ENCODE measurements at regions of chr6 and their contacts with region 1.

Region 1: DNA sequence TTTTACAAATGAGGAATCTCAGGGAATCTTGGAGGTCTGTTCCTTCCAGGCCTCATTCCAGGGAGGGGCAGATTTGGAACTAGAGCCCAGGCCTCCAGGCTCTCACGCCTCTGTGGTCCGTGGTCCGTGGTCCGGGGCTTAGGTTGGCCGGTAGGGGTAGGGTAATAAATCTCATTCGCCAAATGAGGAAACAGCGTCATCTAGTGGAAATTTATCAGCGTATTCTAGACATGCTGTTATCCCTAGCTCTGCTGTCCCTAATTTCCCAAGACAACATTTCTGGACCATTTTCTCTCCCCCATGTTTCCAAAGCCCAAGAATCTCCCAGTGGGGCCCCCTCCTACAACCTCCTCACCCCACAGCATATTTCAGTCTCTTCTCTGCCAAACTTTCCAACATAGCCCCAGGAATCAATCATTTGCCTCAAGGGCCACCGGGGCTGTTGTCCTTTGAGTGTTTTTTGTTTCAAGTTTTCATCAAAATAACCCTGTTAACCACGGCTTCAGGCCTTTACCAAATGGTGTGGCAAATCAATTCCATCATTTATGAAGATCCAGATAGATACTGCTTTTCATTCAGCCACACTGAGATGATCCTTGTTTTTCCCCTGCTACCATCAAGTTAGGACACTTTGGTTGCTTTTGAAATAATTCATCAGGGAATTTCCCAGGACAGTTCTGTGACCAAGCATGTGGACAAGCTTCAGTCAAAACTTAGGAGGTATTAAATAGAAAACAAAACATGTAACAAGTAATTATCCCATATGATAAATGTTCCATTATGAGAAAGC is 126.8 kb downstream of the ALDH8A1 start:
- DNase-seq: no peak
- ATAC-seq: peak; percentile 44

Region 2: GRCh38 chr6:134161036-134161435 is 662.1 kb before region 1 on chr6:
- intact Hi-C with region 1: loop called (anchors 5 kb)
- DNase-seq: no peak
- ATAC-seq: no peak

Region 3: DNA sequence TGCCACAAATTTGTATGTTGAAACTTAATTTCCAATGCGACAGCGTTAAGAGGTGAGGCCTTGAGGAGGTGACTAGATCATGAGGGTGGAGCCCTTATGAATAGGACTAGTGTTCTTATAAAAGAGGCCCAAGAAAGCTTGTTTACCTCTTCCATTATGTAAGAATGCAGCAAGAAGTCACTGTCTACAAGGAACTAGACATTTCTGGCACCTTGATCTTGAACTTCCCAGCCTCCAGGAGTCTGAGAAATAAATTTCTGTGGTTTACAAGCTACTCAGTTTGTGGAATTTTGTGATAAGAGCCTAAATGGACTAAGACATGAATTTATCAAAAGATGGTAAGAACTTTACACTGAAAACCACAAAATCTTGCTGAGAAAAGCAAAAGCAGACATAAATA is 331.6 kb before region 1 on chr6:
- intact Hi-C with region 1: no loop called
- DNase-seq: no peak
- ATAC-seq: no peak

Region 4: GRCh38 chr6:134537146-134537555 is 286.0 kb before region 1 on chr6:
- intact Hi-C with region 1: loop called (anchors 10 kb)
- DNase-seq: no peak
- ATAC-seq: no peak

Region 5: GRCh38 chr6:134640975-134641429 is 182.1 kb before region 1 on chr6:
- intact Hi-C with region 1: loop called (anchors 2 kb)
- DNase-seq: peak; percentile 78
- ATAC-seq: peak; percentile 91

Region 6: GRCh38 chr6:134882426-134883038 is 59.4 kb after region 1 on chr6:
- intact Hi-C with region 1: loop called (anchors 1 kb)
- DNase-seq: no peak
- ATAC-seq: peak; percentile 77

Region 7: GRCh38 chr6:134954272-134955000 is 131.3 kb after region 1 on chr6:
- intact Hi-C with region 1: no loop called
- DNase-seq: no peak
- ATAC-seq: peak; percentile 16

Measured in Right ventricle myocardium inferior (tissue), 1 donor.